CD14-positive monocyte (primary cell): ENCODE measurements at regions of chr11 and their contacts with region 1.

Region 1: GRCh38 chr11:46889689-46890475 is 28.5 kb downstream of the LRP4 start:
- DNase-seq: peak; percentile 59 to 74 (median 72)
- H3K4me3 ChIP-seq: no peak overlapping the region
- H3K4me3 Mint-ChIP-seq: no peak overlapping the region
- H3K27ac ChIP-seq: no peak overlapping the region
- H3K27ac Mint-ChIP-seq: peak overlapping the region in 1 of 7 donors; percentile 44
- H3K4me1 ChIP-seq: no peaks in the 10 kb centered on the region
- H3K4me1 Mint-ChIP-seq: peaks cover 2% of the 10 kb centered on the region
- H3K27me3 ChIP-seq: no peaks in the 10 kb centered on the region
- H3K27me3 Mint-ChIP-seq: peaks cover 0 to 1% (median 0%) of the 10 kb centered on the region in 3 donors
- CTCF ChIP-seq: peak; percentile 85

Region 2: DNA sequence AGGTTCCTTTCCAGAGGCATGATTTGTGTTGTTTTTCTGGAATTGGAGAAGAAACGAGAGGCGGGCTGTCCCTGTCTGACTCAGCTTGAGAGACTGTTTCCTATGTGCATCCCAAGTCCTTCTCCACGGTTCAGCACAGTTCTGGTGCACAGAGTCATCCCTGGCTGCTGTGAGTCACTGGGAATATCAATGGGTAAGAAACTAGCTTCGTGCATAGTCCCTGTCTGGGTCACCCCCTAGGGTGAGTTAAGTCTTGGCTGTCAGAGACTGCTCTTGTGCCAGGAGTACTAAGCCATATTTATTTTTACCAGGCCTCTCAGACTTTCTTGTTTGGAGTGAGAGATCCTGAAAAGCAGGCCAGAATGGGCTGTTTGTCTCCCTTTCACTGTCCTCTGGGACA is 30.9 kb after region 1 on chr11:
- intact Hi-C with region 1: no loop called
- DNase-seq: no peak
- H3K4me3 ChIP-seq: no peak overlapping the region
- H3K4me3 Mint-ChIP-seq: no peak overlapping the region
- H3K27ac ChIP-seq: no peak overlapping the region
- H3K27ac Mint-ChIP-seq: no peak overlapping the region
- H3K4me1 ChIP-seq: peaks cover 22 to 28% of the 10 kb centered on the region in 2 donors
- H3K4me1 Mint-ChIP-seq: peaks cover 32% of the 10 kb centered on the region
- H3K27me3 ChIP-seq: peaks cover 35 to 37% of the 10 kb centered on the region in 2 donors
- H3K27me3 Mint-ChIP-seq: peaks cover 35 to 47% (median 39%) of the 10 kb centered on the region in 3 donors
- CTCF ChIP-seq: no peak

Region 3: DNA sequence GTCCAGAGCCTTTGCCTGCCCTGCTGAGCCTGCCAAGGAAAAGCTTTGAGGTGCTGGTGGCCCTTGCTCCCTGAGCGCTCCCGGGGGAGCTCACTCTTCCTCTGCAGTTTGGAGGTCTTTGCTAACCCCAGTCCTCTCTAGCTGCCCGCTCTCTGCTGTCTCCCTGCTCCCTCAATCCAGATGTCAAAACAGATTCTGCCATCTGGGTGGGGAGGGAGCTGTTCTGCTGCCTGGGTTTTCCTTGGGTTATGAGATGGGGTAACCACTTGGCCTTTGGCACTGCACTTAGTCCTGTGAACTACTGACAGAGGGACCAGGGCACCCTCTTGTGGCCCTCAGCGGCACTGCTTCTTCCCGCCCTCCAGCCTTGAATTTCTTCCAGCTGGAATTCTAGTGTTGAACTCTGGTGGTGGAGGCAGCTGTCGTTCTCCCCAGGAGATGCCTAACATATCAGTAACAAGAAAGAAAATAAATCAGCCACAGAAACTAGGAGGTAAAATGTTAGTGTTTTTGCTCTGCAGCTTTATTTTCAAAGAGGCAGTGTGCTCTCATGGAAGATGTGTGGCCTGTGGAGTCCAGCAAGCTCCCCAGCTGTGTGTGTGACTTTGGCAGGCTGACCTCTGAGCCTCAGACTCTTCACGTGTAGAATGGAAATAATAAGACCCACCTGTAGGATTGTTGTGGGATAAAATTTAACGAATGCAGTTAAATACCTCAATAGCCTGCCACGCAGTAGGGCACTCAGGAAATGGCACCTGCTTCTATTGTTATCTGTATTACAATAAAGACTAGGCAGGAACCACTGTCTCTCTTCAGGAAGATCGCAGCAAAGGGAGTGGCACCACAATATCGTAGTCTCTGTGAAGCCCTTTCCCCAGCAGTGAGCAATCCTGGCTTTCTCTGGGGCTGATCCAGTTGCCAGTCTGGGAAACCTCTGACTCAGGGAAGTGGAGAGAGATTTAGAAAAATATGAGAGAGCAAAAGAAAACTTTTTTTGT is 263.4 kb after region 1 on chr11:
- intact Hi-C with region 1: loop called (anchors 2 kb)
- DNase-seq: peak; percentile 29 to 56 (median 53)
- H3K4me3 ChIP-seq: no peak overlapping the region
- H3K4me3 Mint-ChIP-seq: no peak overlapping the region
- H3K27ac ChIP-seq: no peak overlapping the region
- H3K27ac Mint-ChIP-seq: peak overlapping the region in 1 of 7 donors; percentile 66
- H3K4me1 ChIP-seq: peaks cover 0 to 3% of the 10 kb centered on the region in 2 donors
- H3K4me1 Mint-ChIP-seq: peaks cover 16% of the 10 kb centered on the region
- H3K27me3 ChIP-seq: no peaks in the 10 kb centered on the region
- H3K27me3 Mint-ChIP-seq: peaks cover 3 to 10% (median 7%) of the 10 kb centered on the region in 3 donors
- CTCF ChIP-seq: peak; percentile 86